ENCODE measurements at regions of chr1 and their contacts with region 1.

Region 1: GRCh38 chr1:24594154-24594553 is 38.3 kb downstream of the NCMAP start:
- DNase-seq: no peak

Region 2: DNA sequence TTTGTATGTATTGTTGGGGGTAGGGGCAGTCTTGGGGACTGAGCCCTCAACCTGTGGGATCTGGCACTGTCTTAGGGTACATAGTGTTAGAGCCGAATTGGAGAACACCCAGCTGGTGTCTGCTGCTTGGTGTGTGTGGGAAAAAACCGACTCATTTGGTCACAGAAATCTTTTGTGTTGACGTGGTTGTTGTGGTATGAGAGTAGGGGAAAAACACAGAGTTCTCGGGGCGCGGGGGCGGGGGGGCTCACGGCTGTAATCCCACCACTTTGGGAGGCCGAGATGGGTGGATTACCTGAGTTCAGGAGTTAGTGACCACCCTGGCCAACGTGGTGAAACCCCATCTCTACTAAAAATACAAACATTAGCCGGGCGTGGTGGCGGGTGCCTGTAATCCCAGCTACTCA is 598.7 kb before region 1 on chr1:
- intact Hi-C with region 1: loop called in 1 of 2 experiments (anchors 5 kb)
- DNase-seq: no peak

Region 3: DNA sequence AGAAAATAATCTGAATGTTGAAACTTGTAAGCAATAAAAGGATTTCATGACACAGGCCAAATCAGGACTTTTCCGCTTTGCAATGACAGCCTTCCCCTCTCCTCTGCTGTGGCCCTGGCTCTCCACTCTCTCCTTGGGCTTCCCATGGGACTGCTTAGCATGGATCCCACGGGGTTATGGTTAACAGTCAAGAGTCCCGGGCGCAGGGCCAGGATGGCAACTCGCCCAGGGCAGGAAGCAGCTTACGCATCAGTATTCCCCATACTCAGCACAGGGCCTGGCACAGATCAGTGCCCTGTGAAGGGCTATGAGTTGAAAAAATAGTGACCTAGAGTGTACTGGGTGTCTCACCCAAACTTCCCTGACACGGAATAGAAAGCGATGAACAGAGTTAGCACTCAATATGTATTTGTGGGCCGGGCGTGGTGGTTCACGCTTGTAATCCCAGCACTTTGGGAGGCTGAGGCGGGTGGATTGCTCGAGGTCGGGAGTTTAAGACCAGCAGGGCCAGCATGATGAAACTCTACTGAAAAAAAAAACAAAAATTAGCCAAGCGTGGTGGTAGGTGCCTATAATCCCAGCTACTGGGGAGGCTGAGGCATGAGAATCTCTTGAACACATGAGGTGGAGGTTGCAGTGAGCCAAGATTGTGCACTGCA is 304.1 kb before region 1 on chr1:
- intact Hi-C with region 1: no loop called
- DNase-seq: peak; percentile 93

Measured in posterior vena cava (tissue), 2 donors.